Sigmoid colon (tissue), 7 donors: ENCODE measurements at regions of chr12 and their contacts with region 1.

Region 1: DNA sequence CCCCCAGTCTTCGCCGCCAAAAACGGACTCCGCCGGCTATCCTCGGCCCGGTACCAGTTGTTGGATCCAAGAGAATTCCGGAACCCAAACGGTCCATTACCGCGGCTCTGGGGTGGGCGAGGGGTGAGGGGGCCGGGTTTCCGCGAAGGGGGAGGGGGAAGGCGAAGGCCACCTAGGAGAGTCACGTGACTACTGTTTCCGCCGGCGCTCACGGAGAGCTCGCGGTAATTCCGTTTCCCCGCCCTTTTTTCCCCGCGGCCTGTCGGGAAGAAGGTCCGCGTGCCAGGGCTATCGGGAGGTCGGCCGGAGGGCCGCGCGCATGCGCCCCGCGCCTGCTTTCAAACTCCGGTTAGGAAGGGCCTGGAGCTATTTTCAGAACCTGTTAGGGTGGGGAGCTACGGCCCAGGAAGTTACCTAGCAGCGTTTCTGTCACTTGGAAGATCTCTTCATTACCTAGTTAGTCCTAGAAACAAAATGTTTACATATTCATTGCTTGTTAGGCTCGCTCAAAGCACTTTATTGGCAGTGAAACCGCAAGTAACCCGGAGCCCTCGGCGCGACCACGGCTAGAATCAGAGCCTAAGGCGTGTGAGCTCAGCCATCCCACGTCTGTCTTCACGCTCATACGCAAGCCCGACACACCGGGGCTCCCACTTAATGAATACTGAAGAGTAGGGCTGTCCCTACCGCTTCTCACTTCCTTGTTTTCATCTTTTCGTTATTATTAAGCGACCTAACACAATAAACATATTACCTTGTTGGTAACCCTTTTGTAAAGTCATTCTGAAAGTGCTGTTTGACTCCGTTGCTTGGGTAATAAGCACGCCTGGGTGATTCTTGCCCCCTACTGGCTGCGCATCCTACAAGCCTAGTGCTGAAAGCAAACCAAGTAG is 624 bp upstream of the SBNO1 start:
- DNase-seq: peak; percentile 100
- H3K4me3 ChIP-seq: peak overlapping the region; percentile 82 to 94 (median 86)
- H3K27ac ChIP-seq: peak overlapping the region; percentile 85 to 96 (median 92)
- H3K4me1 ChIP-seq: peaks cover 0 to 37% (median 22%) of the 10 kb centered on the region in 4 donors
- H3K27me3 ChIP-seq: no peaks in the 10 kb centered on the region
- CTCF ChIP-seq: peak; percentile 34 to 87 (median 78)
- EP300 ChIP-seq: peak in 1 of 4 donors; percentile 79
- POLR2A ChIP-seq: peak; percentile 31 to 61

Region 2: DNA sequence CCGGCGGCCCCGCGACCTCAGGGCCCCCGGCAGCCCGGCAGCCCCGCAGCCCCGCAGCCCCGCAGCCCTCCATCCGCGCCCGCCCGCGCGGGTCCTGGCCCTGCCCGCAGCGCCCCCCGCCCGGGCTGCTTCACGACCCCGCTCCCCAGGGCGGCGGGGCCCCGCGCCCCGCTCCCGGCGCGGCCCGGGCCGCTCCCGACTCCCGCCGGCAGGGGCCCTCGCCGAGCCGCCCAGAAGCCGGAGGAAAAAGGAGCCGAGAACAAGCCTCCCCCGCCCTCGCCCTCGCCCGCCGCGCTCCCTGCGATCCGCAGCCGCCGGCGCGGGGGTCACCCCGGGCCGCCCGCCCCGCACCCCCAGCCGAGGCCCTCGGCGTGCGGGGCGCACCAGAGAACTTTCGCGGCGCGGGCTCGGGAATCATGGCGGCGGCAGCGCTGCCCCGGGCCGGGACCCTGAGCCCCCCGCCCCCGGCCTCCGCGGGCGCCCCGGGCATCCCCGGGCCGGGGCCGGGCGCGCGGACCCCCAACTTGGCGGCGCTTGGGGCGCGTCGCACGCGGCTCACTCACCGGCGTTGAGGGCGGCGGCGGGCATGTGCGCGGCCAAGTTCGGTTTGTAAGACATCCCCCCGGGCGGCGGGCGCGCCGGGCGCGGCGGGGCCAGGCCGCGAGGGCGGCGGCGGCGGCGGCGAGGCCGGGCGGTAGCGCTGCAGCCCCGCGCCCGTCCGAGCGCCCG is 94.1 kb before region 1 on chr12:
- intact Hi-C with region 1: loop called (anchors 1 kb)
- DNase-seq: peak; percentile 88
- H3K4me3 ChIP-seq: peak overlapping the region; percentile 63 to 91 (median 80)
- H3K27ac ChIP-seq: peak overlapping the region; percentile 84 to 90 (median 86)
- H3K4me1 ChIP-seq: peaks cover 0 to 44% (median 38%) of the 10 kb centered on the region in 4 donors
- H3K27me3 ChIP-seq: no peaks in the 10 kb centered on the region
- CTCF ChIP-seq: no peak
- EP300 ChIP-seq: no peak
- POLR2A ChIP-seq: no peak

Region 3: DNA sequence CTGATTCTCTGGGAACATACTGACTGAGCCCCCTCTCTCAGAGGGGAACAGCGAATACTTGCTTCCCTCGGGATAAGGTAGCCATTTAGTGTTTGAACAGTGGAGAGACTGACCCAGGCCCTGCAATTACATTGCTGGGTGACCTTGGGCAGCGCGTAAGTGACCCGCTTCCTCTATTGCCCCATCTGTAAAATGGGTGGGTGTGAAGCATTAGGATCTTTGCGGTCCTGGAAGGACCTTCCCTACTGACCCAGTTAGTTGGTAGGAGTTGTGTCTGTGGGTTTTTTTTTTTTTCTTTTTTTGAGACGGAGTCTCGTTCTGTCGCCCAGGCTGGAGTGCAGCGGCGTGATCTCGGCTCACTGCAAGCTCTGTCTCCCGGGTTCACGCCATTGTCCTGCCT is 17.4 kb after region 1 on chr12:
- intact Hi-C with region 1: loop called (anchors 1 kb)
- DNase-seq: no peak
- H3K4me3 ChIP-seq: peak overlapping the region in 1 of 4 donors; percentile 65
- H3K27ac ChIP-seq: no peak overlapping the region
- H3K4me1 ChIP-seq: peaks cover 0 to 15% (median 10%) of the 10 kb centered on the region in 4 donors
- H3K27me3 ChIP-seq: no peaks in the 10 kb centered on the region
- CTCF ChIP-seq: no peak
- EP300 ChIP-seq: no peak
- POLR2A ChIP-seq: no peak

Region 4: GRCh38 chr12:123388177-123388947 is 23.1 kb after region 1 on chr12:
- intact Hi-C with region 1: loop called (anchors 1 kb)
- DNase-seq: peak; percentile 88
- H3K4me3 ChIP-seq: peak overlapping the region; percentile 39 to 75 (median 68)
- H3K27ac ChIP-seq: peak overlapping the region; percentile 92 to 95 (median 94)
- H3K4me1 ChIP-seq: peaks cover 0 to 53% (median 45%) of the 10 kb centered on the region in 4 donors
- H3K27me3 ChIP-seq: no peaks in the 10 kb centered on the region
- CTCF ChIP-seq: no peak
- EP300 ChIP-seq: no peak
- POLR2A ChIP-seq: no peak

Region 5: GRCh38 chr12:123457980-123458783 is 92.9 kb after region 1 on chr12 and contains the start of gene SNRNP35:
- intact Hi-C with region 1: loop called (anchors 5 kb)
- DNase-seq: peak; percentile 89
- H3K4me3 ChIP-seq: peak within 1 kb of the TSS; percentile 58 to 76 (median 72)
- H3K27ac ChIP-seq: peak within 1 kb of the TSS; percentile 95 to 97 (median 96)
- H3K4me1 ChIP-seq: peaks cover 0 to 15% (median 12%) of the 10 kb centered on the region in 4 donors
- H3K27me3 ChIP-seq: no peaks in the 10 kb centered on the region
- CTCF ChIP-seq: no peak
- EP300 ChIP-seq: no peak
- POLR2A ChIP-seq: no peak
- total RNA-seq, gene SNRNP35: 11.0 to 21.6 (median 15.2) TPM